H1 (cell line): ENCODE measurements at regions of chr7 and their contacts with region 1.

Region 1: GRCh38 chr7:129271500-129272355 is 46.9 kb downstream of the AHCYL2 start:
- DNase-seq: peak in 1 of 2 experiments; percentile 64
- H3K4me3 ChIP-seq: no peak overlapping the region
- H3K27ac ChIP-seq: no peak overlapping the region
- H3K4me1 ChIP-seq: no peaks in the 10 kb centered on the region
- H3K27me3 ChIP-seq: no peaks in the 10 kb centered on the region
- CTCF ChIP-seq: peak in 2 of 3 experiments; percentile 76 to 81; a peak in 3 of 4 replicates
- EP300 ChIP-seq: no peak
- POLR2A ChIP-seq: no peak
- RAD21 ChIP-seq: peak; percentile 81 to 89

Region 2: GRCh38 chr7:129224251-129225205 is 47.2 kb before region 1 on chr7 and contains the start of gene AHCYL2:
- CTCF ChIA-PET with region 1: interaction called, 142 read pairs
- POLR2A ChIA-PET with region 1: interaction called, 3 read pairs
- DNase-seq: peak; percentile 88 to 94
- H3K4me3 ChIP-seq: peak within 1 kb of the TSS; percentile 79 to 95 (median 88)
- H3K27ac ChIP-seq: peak within 1 kb of the TSS; percentile 50
- H3K4me1 ChIP-seq: peaks cover 0 to 9% (median 4%) of the 10 kb centered on the region in 4 experiments; a peak in 3 of 7 replicates
- H3K27me3 ChIP-seq: no peaks in the 10 kb centered on the region
- CTCF ChIP-seq: no peak
- EP300 ChIP-seq: no peak
- POLR2A ChIP-seq: peak in 1 of 2 experiments; percentile 59; a peak in 2 of 3 replicates
- RAD21 ChIP-seq: 0 out of 4 replicates have a peak, but pooled peaks of 1 of the 2 experiments have one; percentile 2
- total RNA-seq, gene AHCYL2: 25.4 and 30.5 TPM in 2 replicates

Region 3: GRCh38 chr7:129258649-129259389 is 12.9 kb before region 1 on chr7:
- CTCF ChIA-PET with region 1: interaction called, 28 read pairs
- POLR2A ChIA-PET with region 1: interaction called, 6 read pairs
- DNase-seq: peak in 1 of 2 experiments; percentile 39
- H3K4me3 ChIP-seq: peak overlapping the region in 2 of 4 experiments; percentile 8 to 49; a peak in 3 of 8 replicates
- H3K27ac ChIP-seq: peak overlapping the region; percentile 83
- H3K4me1 ChIP-seq: peaks cover 0 to 21% (median 11%) of the 10 kb centered on the region in 4 experiments; a peak in 6 of 7 replicates
- H3K27me3 ChIP-seq: no peaks in the 10 kb centered on the region
- CTCF ChIP-seq: no peak
- EP300 ChIP-seq: peak in 1 of 2 experiments; percentile 70; a peak in 1 of 3 replicates
- POLR2A ChIP-seq: peak in 1 of 2 experiments; percentile 47; a peak in 2 of 3 replicates
- RAD21 ChIP-seq: no peak

Region 4: GRCh38 chr7:129285111-129285510 is 13.4 kb after region 1 on chr7:
- CTCF ChIA-PET with region 1: interaction called, 30 read pairs
- POLR2A ChIA-PET with region 1: no interaction called
- DNase-seq: no peak
- H3K4me3 ChIP-seq: no peak overlapping the region
- H3K27ac ChIP-seq: 0 out of 2 replicates have a peak overlapping the region, but pooled peaks have one; percentile 29
- H3K4me1 ChIP-seq: peaks cover 2 to 4% (median 3%) of the 10 kb centered on the region in 4 experiments; a peak in 5 of 7 replicates
- H3K27me3 ChIP-seq: no peaks in the 10 kb centered on the region
- CTCF ChIP-seq: no peak
- EP300 ChIP-seq: no peak
- POLR2A ChIP-seq: no peak
- RAD21 ChIP-seq: no peak